GM12878 (cell line): ENCODE measurements at regions of chr3 and their contacts with region 1.

Region 1: DNA sequence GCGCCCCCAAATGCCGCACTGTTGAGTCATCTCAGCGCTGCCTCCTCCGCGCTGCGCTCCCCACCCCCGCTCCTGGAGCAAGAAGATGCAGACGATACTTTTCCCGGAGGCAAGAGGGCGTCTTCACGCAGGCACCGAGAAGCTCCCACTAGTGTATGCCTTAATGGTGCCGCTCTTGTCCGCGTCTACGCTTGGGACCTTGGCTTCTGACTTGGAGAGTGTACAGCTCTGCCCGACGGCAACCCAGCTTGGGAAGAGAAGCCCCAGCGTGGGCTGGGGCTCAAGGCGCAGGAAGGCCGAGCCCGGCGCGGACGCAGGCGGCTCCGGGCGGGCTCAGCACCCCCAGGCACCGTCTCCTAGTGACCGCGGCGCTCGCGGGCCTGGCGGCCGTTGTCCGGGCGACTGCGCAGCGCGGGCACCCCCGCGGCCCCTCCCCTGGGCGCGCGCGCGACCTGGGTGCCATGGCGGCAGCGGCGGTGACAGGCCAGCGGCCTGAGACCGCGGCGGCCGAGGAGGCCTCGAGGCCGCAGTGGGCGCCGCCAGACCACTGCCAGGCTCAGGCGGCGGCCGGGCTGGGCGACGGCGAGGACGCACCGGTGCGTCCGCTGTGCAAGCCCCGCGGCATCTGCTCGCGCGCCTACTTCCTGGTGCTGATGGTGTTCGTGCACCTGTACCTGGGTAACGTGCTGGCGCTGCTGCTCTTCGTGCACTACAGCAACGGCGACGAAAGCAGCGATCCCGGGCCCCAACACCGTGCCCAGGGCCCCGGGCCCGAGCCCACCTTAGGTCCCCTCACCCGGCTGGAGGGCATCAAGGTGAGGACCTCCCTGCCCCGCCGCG is at the start of gene P4HTM:
- DNase-seq: peak; percentile 35
- ATAC-seq: peak; percentile 84
- H3K4me3 ChIP-seq: peak within 1 kb of the TSS; percentile 93
- H3K27ac ChIP-seq: peak within 1 kb of the TSS; percentile 79
- H3K4me1 ChIP-seq: peaks cover 19% of the 10 kb centered on the region
- H3K27me3 ChIP-seq: no peaks in the 10 kb centered on the region
- CTCF ChIP-seq: peak in 2 of 3 experiments; percentile 12 to 46; a peak in 3 of 6 replicates
- EP300 ChIP-seq: 0 out of 4 replicates have a peak, but pooled peaks of 1 of the 2 experiments have one; percentile 13
- POLR2A ChIP-seq: peak; percentile 71
- RAD21 ChIP-seq: peak; percentile 14; the same call in 1 of the 2 replicates
- polyA plus RNA-seq, gene P4HTM: 0.76 to 6.5 TPM

Region 2: GRCh38 chr3:48974076-48974864 is 15.7 kb before region 1 on chr3:
- CTCF ChIA-PET with region 1: interaction called, 14 read pairs
- POLR2A ChIA-PET with region 1: no interaction called
- RAD21 ChIA-PET with region 1: no interaction called
- SMC1A ChIA-PET with region 1: no interaction called
- in situ Hi-C with region 1: no loop called
- intact Hi-C with region 1: no loop called
- DNase-seq: no peak
- ATAC-seq: no peak
- H3K4me3 ChIP-seq: no peak overlapping the region
- H3K27ac ChIP-seq: no peak overlapping the region
- H3K4me1 ChIP-seq: no peaks in the 10 kb centered on the region
- H3K27me3 ChIP-seq: no peaks in the 10 kb centered on the region
- CTCF ChIP-seq: no peak
- EP300 ChIP-seq: no peak
- POLR2A ChIP-seq: no peak
- RAD21 ChIP-seq: no peak

Region 3: GRCh38 chr3:49013755-49014628 is 24.0 kb after region 1 on chr3:
- CTCF ChIA-PET with region 1: interaction called, 123 read pairs
- POLR2A ChIA-PET with region 1: interaction called, 67 read pairs
- RAD21 ChIA-PET with region 1: interaction called, 44 read pairs
- SMC1A ChIA-PET with region 1: interaction called, 57 read pairs
- in situ Hi-C with region 1: no loop called
- intact Hi-C with region 1: loop called (anchors 2 kb)
- DNase-seq: no peak
- ATAC-seq: peak; percentile 67
- H3K4me3 ChIP-seq: no peak overlapping the region
- H3K27ac ChIP-seq: no peak overlapping the region
- H3K4me1 ChIP-seq: peaks cover 5% of the 10 kb centered on the region; the same call in 1 of the 2 replicates
- H3K27me3 ChIP-seq: no peaks in the 10 kb centered on the region
- CTCF ChIP-seq: peak; percentile 62 to 85 (median 71)
- EP300 ChIP-seq: no peak
- POLR2A ChIP-seq: no peak
- RAD21 ChIP-seq: peak; percentile 48

Region 4: DNA sequence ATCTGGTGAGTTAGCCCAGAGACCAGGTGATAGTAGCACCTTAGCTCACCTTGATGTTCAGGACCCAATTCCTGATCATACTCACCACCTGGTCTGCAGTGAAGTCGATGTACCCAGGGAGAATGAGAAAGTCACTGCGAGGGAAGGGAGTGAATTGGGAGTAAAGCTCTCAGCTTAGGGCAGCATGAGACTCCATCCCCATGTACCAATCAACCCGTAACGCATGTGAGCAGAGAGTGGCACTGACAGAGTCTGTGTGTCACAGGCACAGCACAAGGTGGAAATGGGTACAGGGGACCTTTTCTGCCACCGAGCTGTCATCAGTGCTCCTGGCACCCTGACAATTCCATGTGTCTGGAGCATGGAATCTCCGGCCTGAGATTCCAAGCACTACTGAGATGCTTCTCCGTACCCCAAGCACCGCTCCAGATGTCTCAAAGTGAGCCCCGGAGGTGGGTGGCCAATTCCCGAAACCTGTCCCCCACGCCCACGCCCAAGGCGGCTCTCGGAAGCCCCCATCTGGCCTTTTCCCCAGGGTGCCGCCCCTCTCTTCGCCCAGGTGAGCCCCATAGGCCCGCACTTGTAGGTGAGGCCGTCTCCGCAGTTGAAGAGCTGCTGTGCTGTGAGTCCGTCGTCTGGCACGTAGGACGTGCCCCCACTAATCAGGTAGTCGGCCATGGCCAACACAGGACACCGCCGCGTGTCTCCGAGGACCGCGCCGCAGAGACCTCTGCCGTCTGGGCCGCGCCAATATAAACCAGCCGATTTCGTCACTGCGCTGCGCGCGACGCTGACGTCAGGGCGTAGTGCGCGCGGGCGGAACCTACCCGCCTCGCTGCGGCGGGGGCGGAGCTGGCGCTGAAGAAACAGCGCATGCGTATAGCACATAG is 38.9 kb after region 1 on chr3 and contains the start of gene IMPDH2:
- CTCF ChIA-PET with region 1: interaction called, 45 read pairs
- POLR2A ChIA-PET with region 1: interaction called, 27 read pairs
- RAD21 ChIA-PET with region 1: interaction called, 32 read pairs
- SMC1A ChIA-PET with region 1: interaction called, 31 read pairs
- in situ Hi-C with region 1: no loop called
- intact Hi-C with region 1: no loop called
- DNase-seq: peak; percentile 79
- ATAC-seq: peak; percentile 92
- H3K4me3 ChIP-seq: peak within 1 kb of the TSS; percentile 79
- H3K27ac ChIP-seq: peak within 1 kb of the TSS; percentile 76
- H3K4me1 ChIP-seq: peaks cover 13% of the 10 kb centered on the region
- H3K27me3 ChIP-seq: no peaks in the 10 kb centered on the region
- CTCF ChIP-seq: peak in 2 of 3 experiments; percentile 9 to 29; a peak in 1 of 6 replicates
- EP300 ChIP-seq: no peak
- POLR2A ChIP-seq: no peak
- RAD21 ChIP-seq: no peak
- polyA plus RNA-seq, gene IMPDH2: 386 to 424 TPM

Region 5: DNA sequence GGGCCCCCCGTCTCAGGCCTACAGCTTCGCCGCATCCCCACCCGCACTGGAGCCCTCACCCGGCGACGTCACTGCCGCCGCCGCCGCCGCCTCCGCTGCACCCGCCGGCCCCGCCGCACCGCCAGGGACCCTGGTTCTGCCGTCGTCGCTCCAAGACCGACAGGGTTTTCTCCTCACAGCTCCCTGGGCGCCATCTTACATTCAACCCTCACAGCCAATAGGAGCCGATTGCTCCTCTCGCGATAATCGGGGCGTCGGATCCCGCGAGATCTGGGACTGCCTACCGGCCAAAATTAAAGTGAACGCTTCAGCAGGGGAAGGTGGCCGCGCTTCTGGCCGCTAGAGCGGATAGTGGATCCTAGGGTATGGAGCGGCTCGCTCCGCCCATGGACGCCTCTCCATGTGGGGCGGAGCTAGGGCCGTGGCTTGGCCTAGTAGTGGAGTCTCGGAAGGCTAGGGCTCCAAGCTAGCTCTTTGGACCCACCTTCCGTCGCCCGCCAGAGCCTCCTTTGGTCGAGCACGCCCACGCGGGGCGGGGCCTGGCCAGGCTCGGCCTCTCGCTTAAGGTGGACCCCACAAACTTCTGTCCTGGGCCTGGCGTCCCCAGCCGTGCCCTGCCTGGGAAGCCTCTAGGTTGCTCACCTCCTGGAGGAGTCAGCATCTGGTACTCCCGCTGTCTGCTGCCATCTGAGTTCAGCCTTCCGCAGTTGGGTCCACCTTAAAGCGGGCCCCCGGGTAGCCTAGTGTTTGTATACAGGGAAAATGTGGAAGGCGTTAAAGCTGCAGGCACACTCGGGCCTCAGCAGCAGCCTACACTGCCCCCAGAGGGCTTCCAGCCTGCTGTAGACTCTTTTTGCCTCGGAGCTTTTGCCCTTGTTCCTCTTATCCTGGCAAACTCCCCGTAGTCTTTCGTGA is 104.1 kb after region 1 on chr3 and contains the start of gene QRICH1:
- CTCF ChIA-PET with region 1: interaction called, 41 read pairs
- POLR2A ChIA-PET with region 1: interaction called, 11 read pairs
- RAD21 ChIA-PET with region 1: interaction called, 14 read pairs
- SMC1A ChIA-PET with region 1: interaction called, 20 read pairs
- in situ Hi-C with region 1: no loop called
- intact Hi-C with region 1: loop called (anchors 5 kb)
- DNase-seq: peak; percentile 90
- ATAC-seq: peak; percentile 92
- H3K4me3 ChIP-seq: peak within 1 kb of the TSS; percentile 96
- H3K27ac ChIP-seq: peak within 1 kb of the TSS; percentile 91
- H3K4me1 ChIP-seq: peaks cover 11% of the 10 kb centered on the region
- H3K27me3 ChIP-seq: no peaks in the 10 kb centered on the region
- CTCF ChIP-seq: peak; percentile 54 to 73 (median 65)
- EP300 ChIP-seq: no peak
- POLR2A ChIP-seq: peak; percentile 87
- RAD21 ChIP-seq: peak; percentile 47
- polyA plus RNA-seq, gene QRICH1: 22.2 to 23.3 TPM

Region 6: DNA sequence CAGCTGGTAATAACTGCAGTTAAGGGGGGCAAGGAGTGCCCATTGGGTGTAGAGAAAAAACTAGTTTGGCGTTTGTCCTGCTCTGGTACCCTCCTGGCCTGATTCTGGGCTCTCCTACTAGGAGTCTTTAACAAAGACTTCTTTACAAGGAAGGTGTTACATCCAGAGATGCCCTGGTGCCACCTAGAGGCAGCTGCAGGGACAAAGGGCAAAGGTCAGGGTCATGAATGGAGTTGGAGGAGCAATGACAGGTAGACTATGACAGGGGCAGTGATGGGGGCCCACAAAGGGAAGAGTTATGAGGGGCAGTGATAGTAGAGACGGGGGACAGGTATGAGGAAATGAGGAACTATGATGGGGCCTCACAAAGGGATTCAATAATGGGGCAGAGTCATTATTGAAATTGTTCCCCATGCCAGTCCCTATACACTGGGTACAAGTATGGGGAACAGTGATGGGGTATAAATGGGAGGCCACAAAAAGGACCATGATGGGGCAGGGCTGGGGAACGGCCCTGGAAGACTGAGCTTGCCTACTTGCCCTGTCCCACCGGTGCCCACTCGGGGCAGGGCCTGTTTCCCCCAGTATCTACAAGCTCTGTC is 168.2 kb after region 1 on chr3:
- CTCF ChIA-PET with region 1: interaction called, 34 read pairs
- POLR2A ChIA-PET with region 1: no interaction called
- RAD21 ChIA-PET with region 1: interaction called, 8 read pairs
- SMC1A ChIA-PET with region 1: interaction called, 13 read pairs
- in situ Hi-C with region 1: no loop called
- intact Hi-C with region 1: loop called (anchors 2 kb)
- DNase-seq: peak; percentile 13
- ATAC-seq: peak; percentile 87
- H3K4me3 ChIP-seq: no peak overlapping the region
- H3K27ac ChIP-seq: no peak overlapping the region
- H3K4me1 ChIP-seq: no peaks in the 10 kb centered on the region
- H3K27me3 ChIP-seq: no peaks in the 10 kb centered on the region
- CTCF ChIP-seq: peak; percentile 63 to 77 (median 75)
- EP300 ChIP-seq: no peak
- POLR2A ChIP-seq: no peak
- RAD21 ChIP-seq: peak; percentile 69